Activated CD4-positive, alpha-beta T cell treated with anti-CD3 and anti-CD28 coated beads, Interleukin-2, amount 10 ng/mL, durations not matched to agents 24 days and 14 days (primary cell): ENCODE measurements at regions of chr2 and their contacts with region 1.

Region 1: DNA sequence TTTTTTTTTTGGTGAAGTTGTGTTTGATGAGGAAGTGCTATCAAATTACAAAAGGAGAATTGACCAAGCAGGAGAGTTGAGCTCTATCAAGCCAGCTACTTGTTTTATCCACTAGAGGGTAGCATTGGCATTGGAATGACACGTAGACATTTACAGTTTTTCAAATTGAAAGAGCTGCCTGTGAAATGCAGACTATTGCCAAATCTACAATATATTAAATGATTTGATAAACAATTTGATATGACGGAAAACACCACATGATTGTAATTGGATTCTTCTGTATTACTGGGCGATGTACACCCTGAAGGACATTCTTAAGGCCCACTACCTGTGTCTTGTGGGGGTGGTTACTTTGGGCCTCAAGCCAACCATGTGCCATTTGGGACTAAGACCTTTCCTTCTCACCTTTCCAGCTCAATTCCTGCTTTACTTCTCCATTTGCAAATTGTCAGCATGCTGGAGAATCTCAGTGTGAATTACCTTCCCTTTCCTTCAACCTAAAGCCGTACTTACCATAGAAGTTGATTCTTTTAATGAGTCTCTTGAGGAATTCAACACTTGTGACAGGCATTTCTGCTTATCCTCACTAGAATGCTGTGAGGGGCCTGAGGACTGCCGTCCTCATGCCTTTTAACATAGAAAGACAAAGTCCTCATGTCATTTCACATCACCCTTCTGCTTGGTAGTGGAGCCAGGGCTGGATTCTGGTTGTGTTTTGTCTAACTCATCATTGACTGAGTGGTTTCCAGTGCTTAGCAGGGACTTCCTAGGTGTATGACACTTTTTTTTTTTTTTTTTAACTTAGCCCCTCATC is 134.8 kb upstream of the THUMPD2 start:
- DNase-seq: peak; percentile 78
- H3K4me3 Mint-ChIP-seq: no peak overlapping the region
- H3K27ac Mint-ChIP-seq: peak overlapping the region; percentile 43
- H3K4me1 Mint-ChIP-seq: peaks cover 25% of the 10 kb centered on the region
- H3K27me3 Mint-ChIP-seq: peaks cover 11% of the 10 kb centered on the region

Region 2: GRCh38 chr2:39893616-39894015 is 20.2 kb before region 1 on chr2:
- intact Hi-C with region 1: no loop called
- DNase-seq: no peak
- H3K4me3 Mint-ChIP-seq: no peak overlapping the region
- H3K27ac Mint-ChIP-seq: no peak overlapping the region
- H3K4me1 Mint-ChIP-seq: no peaks in the 10 kb centered on the region
- H3K27me3 Mint-ChIP-seq: peaks cover 5% of the 10 kb centered on the region

Region 3: DNA sequence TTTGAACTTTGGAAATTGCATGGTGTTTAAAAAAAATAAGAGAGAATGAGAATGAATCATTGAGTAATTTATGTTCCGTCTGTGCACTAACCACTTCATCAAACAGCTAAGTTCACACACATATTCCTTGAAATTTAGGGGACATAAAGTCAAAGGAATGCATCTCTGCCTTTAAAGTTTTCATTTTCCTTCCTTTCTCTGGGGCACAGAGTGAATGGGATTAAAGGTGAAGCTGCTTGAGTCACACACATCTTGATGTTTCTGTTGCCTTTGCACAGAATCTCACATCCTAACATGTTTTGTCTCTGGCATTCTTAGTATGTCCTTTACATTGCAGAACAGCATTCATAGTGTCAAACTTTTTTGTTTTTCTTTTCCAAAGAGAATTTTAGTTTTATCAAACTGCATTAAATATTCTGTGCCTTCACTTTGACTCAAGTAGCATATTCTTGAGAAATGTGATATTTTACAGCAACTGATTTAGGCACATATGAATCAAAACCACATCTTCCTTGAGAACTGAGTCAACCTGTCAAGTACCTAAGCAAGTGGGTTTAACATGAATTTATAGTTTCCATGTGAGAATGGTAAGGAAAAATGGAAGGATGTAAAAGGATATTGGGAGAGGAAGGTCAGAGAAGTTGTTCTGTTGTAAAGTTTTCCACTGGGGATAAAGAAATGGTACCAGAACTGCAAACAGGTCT is 34.3 kb after region 1 on chr2:
- intact Hi-C with region 1: loop called (anchors 5 kb)
- DNase-seq: no peak
- H3K4me3 Mint-ChIP-seq: peak overlapping the region; percentile 32
- H3K27ac Mint-ChIP-seq: peak overlapping the region; percentile 92
- H3K4me1 Mint-ChIP-seq: peaks cover 35% of the 10 kb centered on the region
- H3K27me3 Mint-ChIP-seq: no peaks in the 10 kb centered on the region

Region 4: GRCh38 chr2:40210344-40210967 is 296.6 kb after region 1 on chr2:
- intact Hi-C with region 1: loop called (anchors 2 kb)
- DNase-seq: no peak
- H3K4me3 Mint-ChIP-seq: no peak overlapping the region
- H3K27ac Mint-ChIP-seq: peak overlapping the region; percentile 48
- H3K4me1 Mint-ChIP-seq: peaks cover 20% of the 10 kb centered on the region
- H3K27me3 Mint-ChIP-seq: no peaks in the 10 kb centered on the region

Region 5: GRCh38 chr2:41400088-41400665 is 1486.3 kb after region 1 on chr2:
- intact Hi-C with region 1: loop called (anchors 5 kb)
- DNase-seq: no peak
- H3K4me3 Mint-ChIP-seq: no peak overlapping the region
- H3K27ac Mint-ChIP-seq: no peak overlapping the region
- H3K4me1 Mint-ChIP-seq: no peaks in the 10 kb centered on the region
- H3K27me3 Mint-ChIP-seq: no peaks in the 10 kb centered on the region

Region 6: DNA sequence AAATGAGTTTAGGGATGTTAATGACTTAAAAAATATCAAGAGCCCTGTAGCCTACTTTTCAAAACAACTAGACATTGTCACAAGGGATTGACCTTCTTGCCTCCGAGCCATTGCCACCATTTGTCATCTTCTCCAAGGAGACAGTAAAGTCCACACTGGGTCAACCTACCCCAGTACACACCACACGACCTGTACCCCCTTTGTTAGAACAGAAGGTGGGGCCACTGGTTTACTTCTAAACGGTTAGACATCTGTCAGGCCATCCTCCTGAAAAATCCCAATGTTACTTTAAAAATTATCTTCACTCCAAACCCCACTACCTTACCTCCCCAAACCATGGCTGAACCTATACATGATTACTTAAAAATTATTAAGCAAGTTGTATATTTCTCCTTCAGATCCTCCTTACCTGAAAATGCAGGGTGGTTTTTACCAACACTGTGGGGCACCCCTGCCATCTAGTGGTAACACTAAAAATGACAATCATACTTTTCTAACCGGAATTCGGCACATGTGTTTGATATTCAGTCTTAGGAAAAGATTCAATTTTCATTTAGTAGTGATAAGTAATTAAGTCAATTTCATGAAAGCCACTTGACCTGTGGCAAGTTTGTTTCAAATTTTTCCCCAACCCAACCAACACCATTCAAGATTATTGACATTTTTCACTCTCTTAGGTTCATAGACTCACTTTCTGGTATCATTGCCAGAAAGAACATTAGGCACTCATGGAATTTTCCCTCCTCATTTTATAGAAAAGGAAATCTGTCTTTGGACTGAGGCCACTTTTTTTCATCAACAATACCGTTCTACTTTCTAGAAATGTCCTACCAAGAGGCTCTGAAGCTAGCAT is 1868.7 kb after region 1 on chr2:
- intact Hi-C with region 1: loop called (anchors 5 kb)
- DNase-seq: peak; percentile 77
- H3K4me3 Mint-ChIP-seq: no peak overlapping the region
- H3K27ac Mint-ChIP-seq: no peak overlapping the region
- H3K4me1 Mint-ChIP-seq: no peaks in the 10 kb centered on the region
- H3K27me3 Mint-ChIP-seq: peaks cover 6% of the 10 kb centered on the region